ENCODE measurements at regions of chr11 and their contacts with region 1.

Region 1: DNA sequence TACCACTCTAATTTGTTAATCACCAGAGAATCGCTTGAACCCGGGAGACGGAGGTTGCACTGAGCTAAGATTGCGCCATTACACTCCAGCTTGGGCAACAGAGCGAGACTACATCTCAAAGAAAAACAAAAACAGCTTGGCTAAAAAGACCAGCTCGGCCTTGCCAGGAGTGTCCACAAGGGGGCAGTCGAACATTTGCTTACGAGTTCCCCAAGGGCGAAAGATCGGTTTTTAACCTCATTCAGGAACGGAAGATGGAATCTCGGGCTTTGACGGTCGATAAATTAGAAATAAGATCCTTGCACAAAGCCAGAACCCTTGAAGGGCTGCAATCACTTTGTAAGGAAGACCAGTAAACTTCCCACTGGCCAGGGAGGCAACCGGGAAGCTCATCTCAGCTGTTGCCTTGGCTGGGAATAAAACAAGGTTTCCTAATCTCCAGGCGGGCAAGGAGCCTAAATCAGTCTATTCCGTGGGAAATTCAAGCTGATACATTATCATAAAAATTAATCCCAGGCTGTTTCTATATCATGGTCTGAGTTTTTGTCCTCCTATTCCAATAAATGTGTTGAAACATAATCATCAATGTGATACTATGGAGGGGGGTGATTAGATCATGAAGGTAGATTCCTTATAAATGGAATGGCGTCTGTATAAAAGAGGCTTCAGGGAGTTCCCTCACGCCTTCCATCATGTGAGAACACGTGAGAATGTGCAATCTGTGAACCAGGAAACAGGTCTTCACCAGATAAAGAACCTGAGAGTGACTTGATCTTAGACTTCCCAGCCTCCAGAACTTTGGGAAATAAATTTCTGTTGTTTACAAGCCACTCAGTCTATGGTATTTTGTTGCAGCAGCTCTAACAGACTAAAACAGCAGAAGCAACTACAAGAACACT is 14.9 kb upstream of the SLC29A2 start:
- DNase-seq: peak; percentile 92
- H3K4me3 ChIP-seq: no peak overlapping the region
- H3K27ac ChIP-seq: no peak overlapping the region
- H3K4me1 ChIP-seq: no peaks in the 10 kb centered on the region
- H3K27me3 ChIP-seq: no peaks in the 10 kb centered on the region
- CTCF ChIP-seq: peak; percentile 94

Region 2: GRCh38 chr11:65927904-65928397 is 458.5 kb before region 1 on chr11:
- intact Hi-C with region 1: no loop called
- DNase-seq: peak; percentile 45
- H3K4me3 ChIP-seq: no peak overlapping the region
- H3K27ac ChIP-seq: peak overlapping the region; percentile 66
- H3K4me1 ChIP-seq: no peaks in the 10 kb centered on the region
- H3K27me3 ChIP-seq: no peaks in the 10 kb centered on the region
- CTCF ChIP-seq: no peak

Region 3: DNA sequence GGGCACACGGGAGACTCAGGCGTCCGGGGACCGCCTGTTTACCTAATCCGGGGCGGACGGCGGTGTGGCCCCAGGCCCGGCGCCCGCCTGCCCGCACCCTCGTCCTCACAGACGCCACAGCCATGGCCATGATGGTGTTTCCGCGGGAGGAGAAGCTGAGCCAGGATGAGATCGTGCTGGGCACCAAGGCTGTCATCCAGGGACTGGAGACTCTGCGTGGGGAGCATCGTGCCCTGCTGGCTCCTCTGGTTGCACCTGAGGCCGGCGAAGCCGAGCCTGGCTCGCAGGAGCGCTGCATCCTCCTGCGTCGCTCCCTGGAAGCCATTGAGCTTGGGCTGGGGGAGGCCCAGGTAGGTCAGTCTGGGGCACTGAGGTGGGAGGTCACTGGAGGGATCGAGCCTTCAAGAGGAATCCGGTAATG is 127.9 kb before region 1 on chr11:
- intact Hi-C with region 1: no loop called
- DNase-seq: no peak
- H3K4me3 ChIP-seq: peak overlapping the region; percentile 95
- H3K27ac ChIP-seq: peak overlapping the region; percentile 84
- H3K4me1 ChIP-seq: peaks cover 6% of the 10 kb centered on the region
- H3K27me3 ChIP-seq: no peaks in the 10 kb centered on the region
- CTCF ChIP-seq: peak; percentile 23

Region 4: GRCh38 chr11:66311965-66312548 is 74.4 kb before region 1 on chr11:
- intact Hi-C with region 1: loop called (anchors 1 kb)
- DNase-seq: peak; percentile 94
- H3K4me3 ChIP-seq: peak overlapping the region; percentile 54
- H3K27ac ChIP-seq: peak overlapping the region; percentile 89
- H3K4me1 ChIP-seq: peaks cover 5% of the 10 kb centered on the region
- H3K27me3 ChIP-seq: no peaks in the 10 kb centered on the region
- CTCF ChIP-seq: no peak

Region 5: GRCh38 chr11:66328307-66329144 is 57.9 kb before region 1 on chr11:
- intact Hi-C with region 1: loop called (anchors 5 kb)
- DNase-seq: peak; percentile 80
- H3K4me3 ChIP-seq: no peak overlapping the region
- H3K27ac ChIP-seq: peak overlapping the region; percentile 15
- H3K4me1 ChIP-seq: peaks cover 14% of the 10 kb centered on the region
- H3K27me3 ChIP-seq: no peaks in the 10 kb centered on the region
- CTCF ChIP-seq: peak; percentile 96